Caco-2 (cell line): ENCODE measurements at regions of chr1 and their contacts with region 1.

Region 1: GRCh38 chr1:33219881-33220661 is 36.2 kb upstream of the ZNF362 start:
- DNase-seq: peak; percentile 62 to 77
- H3K4me3 ChIP-seq: no peak overlapping the region
- H3K4me3 Mint-ChIP-seq: peak overlapping the region; percentile 34
- H3K27ac Mint-ChIP-seq: peak overlapping the region; percentile 87
- H3K4me1 ChIP-seq: peaks cover 33% of the 10 kb centered on the region
- H3K4me1 Mint-ChIP-seq: peaks cover 23% of the 10 kb centered on the region
- H3K27me3 ChIP-seq: no peaks in the 10 kb centered on the region
- H3K27me3 Mint-ChIP-seq: no peaks in the 10 kb centered on the region
- CTCF ChIP-seq: no peak

Region 2: GRCh38 chr1:33234588-33234990 is 14.5 kb after region 1 on chr1:
- CTCF ChIA-PET with region 1: no interaction called
- POLR2A ChIA-PET with region 1: no interaction called
- intact Hi-C with region 1: loop called (anchors 2 kb)
- DNase-seq: no peak
- H3K4me3 ChIP-seq: no peak overlapping the region
- H3K4me3 Mint-ChIP-seq: no peak overlapping the region
- H3K27ac Mint-ChIP-seq: peak overlapping the region; percentile 62
- H3K4me1 ChIP-seq: peaks cover 19% of the 10 kb centered on the region
- H3K4me1 Mint-ChIP-seq: peaks cover 21% of the 10 kb centered on the region
- H3K27me3 ChIP-seq: no peaks in the 10 kb centered on the region
- H3K27me3 Mint-ChIP-seq: no peaks in the 10 kb centered on the region
- CTCF ChIP-seq: no peak

Region 3: GRCh38 chr1:33257772-33258712 is 38.0 kb after region 1 on chr1:
- CTCF ChIA-PET with region 1: interaction called, 3 read pairs
- POLR2A ChIA-PET with region 1: no interaction called
- intact Hi-C with region 1: loop called (anchors 2 kb)
- DNase-seq: peak; percentile 37 to 61
- H3K4me3 ChIP-seq: peak overlapping the region; percentile 47
- H3K4me3 Mint-ChIP-seq: peak overlapping the region; percentile 79
- H3K27ac Mint-ChIP-seq: peak overlapping the region; percentile 93
- H3K4me1 ChIP-seq: peaks cover 23% of the 10 kb centered on the region
- H3K4me1 Mint-ChIP-seq: peaks cover 16% of the 10 kb centered on the region
- H3K27me3 ChIP-seq: no peaks in the 10 kb centered on the region
- H3K27me3 Mint-ChIP-seq: no peaks in the 10 kb centered on the region
- CTCF ChIP-seq: no peak

Region 4: GRCh38 chr1:33295450-33296081 is 75.5 kb after region 1 on chr1:
- CTCF ChIA-PET with region 1: interaction called, 4 read pairs
- POLR2A ChIA-PET with region 1: no interaction called
- intact Hi-C with region 1: loop called (anchors 1 kb)
- DNase-seq: peak; percentile 72 to 84
- H3K4me3 ChIP-seq: no peak overlapping the region
- H3K4me3 Mint-ChIP-seq: no peak overlapping the region
- H3K27ac Mint-ChIP-seq: no peak overlapping the region
- H3K4me1 ChIP-seq: no peaks in the 10 kb centered on the region
- H3K4me1 Mint-ChIP-seq: no peaks in the 10 kb centered on the region
- H3K27me3 ChIP-seq: no peaks in the 10 kb centered on the region
- H3K27me3 Mint-ChIP-seq: no peaks in the 10 kb centered on the region
- CTCF ChIP-seq: peak; percentile 78 to 80